ENCODE measurements at regions of chr10 and their contacts with region 1.

Region 1: DNA sequence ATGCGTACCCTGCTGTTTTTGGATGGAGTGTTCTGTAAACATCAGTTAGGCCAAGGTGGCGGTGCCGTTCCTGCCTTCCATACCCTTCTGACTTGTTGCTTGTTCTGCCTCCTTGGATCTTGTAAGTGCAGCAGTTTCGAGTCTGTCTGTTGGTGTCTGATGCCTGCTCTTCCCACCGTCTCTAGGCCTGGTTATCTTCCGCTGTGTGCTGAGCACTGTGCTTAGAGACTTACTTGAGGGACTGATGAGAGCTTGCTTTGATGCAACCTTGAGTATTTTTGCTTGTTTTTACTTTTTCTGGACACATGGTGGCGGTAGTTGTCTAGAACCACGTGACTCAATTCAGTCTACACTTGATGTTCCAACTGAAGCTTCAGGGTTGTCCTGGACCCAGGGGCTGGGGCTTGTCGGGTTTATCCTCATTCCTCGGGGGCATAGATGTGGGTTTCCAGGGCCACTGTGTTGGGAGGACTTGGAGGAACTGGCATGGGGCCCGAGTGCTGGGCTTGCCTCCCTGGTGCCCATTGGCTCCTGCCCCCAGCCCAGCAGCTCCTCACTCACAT is 14.4 kb upstream of the SPRN start:
- DNase-seq: peak; percentile 54
- H3K4me3 ChIP-seq: no peak overlapping the region
- H3K27ac ChIP-seq: no peak overlapping the region
- H3K4me1 ChIP-seq: no peaks in the 10 kb centered on the region
- CTCF ChIP-seq: peak; percentile 78

Region 2: GRCh38 chr10:133608855-133609254 is 170.1 kb after region 1 on chr10:
- CTCF ChIA-PET with region 1: no interaction called
- POLR2A ChIA-PET with region 1: no interaction called
- intact Hi-C with region 1: loop called (anchors 2 kb)
- DNase-seq: peak; percentile 53
- H3K4me3 ChIP-seq: no peak overlapping the region
- H3K27ac ChIP-seq: no peak overlapping the region
- H3K4me1 ChIP-seq: peaks cover 6% of the 10 kb centered on the region
- CTCF ChIP-seq: peak; percentile 84

Measured in OCI-LY7 (cell line).